Activated CD4-positive, alpha-beta memory T cell treated with anti-CD3 and anti-CD28 coated beads for 36 hours (primary cell): ENCODE measurements at regions of chrX and their contacts with region 1.

Region 1: DNA sequence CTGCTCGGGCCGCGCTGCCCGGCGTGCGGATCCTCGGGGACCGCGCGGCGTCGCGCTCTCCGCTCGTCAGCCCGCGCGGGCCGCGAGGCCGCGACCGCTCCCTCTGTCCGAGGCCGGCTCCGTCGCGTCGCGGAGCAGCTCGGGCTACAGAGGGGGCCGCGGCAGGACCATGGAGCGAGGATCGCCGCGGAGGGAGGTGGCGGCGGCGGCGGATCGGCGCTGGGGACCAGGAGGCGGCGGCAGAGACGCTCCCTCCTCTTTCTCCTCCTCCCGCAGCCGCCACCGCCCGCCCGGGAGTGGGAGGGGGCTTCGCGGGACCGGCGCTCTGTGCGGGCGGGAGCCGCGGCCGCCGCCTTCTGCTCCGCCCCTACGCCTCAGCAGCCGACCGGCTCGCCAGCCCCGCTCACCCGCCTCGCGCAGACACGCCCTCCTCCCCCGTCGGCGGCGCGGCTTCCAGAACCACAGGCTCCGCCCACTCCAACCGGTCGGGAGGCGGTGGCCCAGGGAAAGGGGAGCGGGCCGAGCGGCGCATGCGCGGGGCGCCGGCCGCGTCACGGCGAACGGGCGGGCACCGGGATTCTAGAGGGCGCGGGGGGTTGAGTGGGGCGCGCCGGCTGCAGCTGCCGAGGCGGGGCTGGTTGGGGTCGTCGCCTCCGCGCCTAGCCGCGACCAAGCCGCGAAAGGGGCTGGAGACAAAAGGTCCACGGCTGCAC is at the start of gene CASK:
- DNase-seq: peak; percentile 93
- H3K4me3 Mint-ChIP-seq: peak within 1 kb of the TSS; percentile 92
- H3K27ac Mint-ChIP-seq: peak within 1 kb of the TSS; percentile 89
- H3K4me1 Mint-ChIP-seq: peaks cover 26% of the 10 kb centered on the region
- H3K27me3 Mint-ChIP-seq: no peaks in the 10 kb centered on the region
- total RNA-seq, gene CASK: 27.0 to 27.8 TPM

Region 2: DNA sequence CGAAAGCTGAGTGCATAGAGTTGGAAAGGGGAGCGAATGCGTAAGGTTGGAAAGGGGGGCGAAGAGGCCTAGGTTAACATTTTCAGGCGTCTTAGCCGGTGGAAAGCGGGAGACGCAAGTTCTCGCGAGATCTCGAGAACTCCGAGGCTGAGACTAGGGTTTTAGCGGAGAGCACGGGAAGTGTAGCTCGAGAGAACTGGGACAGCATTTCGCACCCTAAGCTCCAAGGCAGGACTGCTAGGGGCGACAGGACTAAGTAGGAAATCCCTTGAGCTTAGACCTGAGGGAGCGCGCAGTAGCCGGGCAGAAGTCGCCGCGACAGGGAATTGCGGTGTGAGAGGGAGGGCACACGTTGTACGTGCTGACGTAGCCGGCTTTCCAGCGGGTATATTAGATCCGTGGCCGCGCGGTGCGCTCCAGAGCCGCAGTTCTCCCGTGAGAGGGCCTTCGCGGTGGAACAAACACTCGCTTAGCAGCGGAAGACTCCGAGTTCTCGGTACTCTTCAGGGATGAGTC is 589.6 kb before region 1 on chrX and contains the start of gene DDX3X:
- CTCF ChIA-PET with region 1: no interaction called
- POLR2A ChIA-PET with region 1: no interaction called
- intact Hi-C with region 1: loop called (anchors 5 kb)
- DNase-seq: peak; percentile 89
- H3K4me3 Mint-ChIP-seq: peak within 1 kb of the TSS; percentile 93
- H3K27ac Mint-ChIP-seq: peak within 1 kb of the TSS; percentile 100
- H3K4me1 Mint-ChIP-seq: peaks cover 17% of the 10 kb centered on the region
- H3K27me3 Mint-ChIP-seq: peaks cover 1% of the 10 kb centered on the region
- total RNA-seq, gene DDX3X: 216 to 218 TPM

Region 3: DNA sequence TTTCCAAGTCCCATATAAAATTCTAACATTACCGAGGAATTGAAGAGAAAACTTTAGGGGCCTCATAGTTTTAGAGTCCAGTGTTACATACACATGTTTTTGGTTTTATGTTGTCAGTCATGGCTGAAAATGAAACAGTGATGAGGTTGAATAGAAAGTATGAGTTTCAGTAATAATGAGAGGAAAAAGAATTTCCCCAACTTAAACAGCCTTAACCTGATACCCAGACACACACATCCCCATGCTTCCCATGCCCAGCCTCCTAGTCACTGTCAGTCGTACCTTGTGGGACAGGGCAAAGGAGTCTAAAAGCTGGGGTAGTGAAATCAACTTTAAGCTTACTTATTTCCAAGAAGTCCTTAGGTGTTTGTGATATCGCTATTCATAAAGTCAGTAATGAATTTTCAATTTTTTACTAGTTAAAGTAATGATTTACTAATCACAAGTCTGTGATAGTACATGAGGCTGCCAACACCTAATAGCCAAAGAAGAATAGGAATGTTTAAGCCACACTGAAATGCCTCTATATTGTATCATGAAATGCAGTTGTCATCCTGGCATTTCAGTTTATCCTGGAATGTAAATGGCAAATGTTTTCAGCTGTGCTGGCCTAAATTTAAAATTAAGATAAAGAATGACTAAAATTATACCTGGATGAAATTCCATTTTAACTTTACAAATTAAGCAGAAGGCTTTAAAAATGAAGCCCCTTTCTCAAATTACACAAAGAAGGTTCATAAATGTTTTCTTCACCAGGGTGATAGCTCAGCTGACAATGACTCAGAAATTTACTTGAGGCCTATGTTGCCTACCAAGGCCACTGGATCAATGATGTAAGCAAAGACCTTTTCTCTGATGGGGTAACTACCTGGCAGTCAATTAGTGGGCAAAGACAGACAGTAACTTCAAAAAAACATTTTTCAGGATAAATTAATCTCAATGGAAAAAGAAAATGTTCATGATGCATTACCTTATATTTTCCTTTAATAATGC is 258.8 kb before region 1 on chrX:
- CTCF ChIA-PET with region 1: no interaction called
- POLR2A ChIA-PET with region 1: no interaction called
- intact Hi-C with region 1: loop called (anchors 10 kb)
- DNase-seq: peak; percentile 33
- H3K4me3 Mint-ChIP-seq: no peak overlapping the region
- H3K27ac Mint-ChIP-seq: peak overlapping the region; percentile 73
- H3K4me1 Mint-ChIP-seq: peaks cover 47% of the 10 kb centered on the region
- H3K27me3 Mint-ChIP-seq: no peaks in the 10 kb centered on the region

Region 4: GRCh38 chrX:41868392-41868977 is 54.9 kb before region 1 on chrX:
- CTCF ChIA-PET with region 1: no interaction called
- POLR2A ChIA-PET with region 1: no interaction called
- intact Hi-C with region 1: loop called (anchors 5 kb)
- DNase-seq: no peak
- H3K4me3 Mint-ChIP-seq: no peak overlapping the region
- H3K27ac Mint-ChIP-seq: peak overlapping the region; percentile 45
- H3K4me1 Mint-ChIP-seq: peaks cover 55% of the 10 kb centered on the region
- H3K27me3 Mint-ChIP-seq: no peaks in the 10 kb centered on the region

Region 5: GRCh38 chrX:41933546-41933945 is 10.1 kb after region 1 on chrX:
- CTCF ChIA-PET with region 1: no interaction called
- POLR2A ChIA-PET with region 1: no interaction called
- intact Hi-C with region 1: loop called (anchors 1 kb)
- DNase-seq: no peak
- H3K4me3 Mint-ChIP-seq: no peak overlapping the region
- H3K27ac Mint-ChIP-seq: no peak overlapping the region
- H3K4me1 Mint-ChIP-seq: peaks cover 21% of the 10 kb centered on the region
- H3K27me3 Mint-ChIP-seq: no peaks in the 10 kb centered on the region

Region 6: DNA sequence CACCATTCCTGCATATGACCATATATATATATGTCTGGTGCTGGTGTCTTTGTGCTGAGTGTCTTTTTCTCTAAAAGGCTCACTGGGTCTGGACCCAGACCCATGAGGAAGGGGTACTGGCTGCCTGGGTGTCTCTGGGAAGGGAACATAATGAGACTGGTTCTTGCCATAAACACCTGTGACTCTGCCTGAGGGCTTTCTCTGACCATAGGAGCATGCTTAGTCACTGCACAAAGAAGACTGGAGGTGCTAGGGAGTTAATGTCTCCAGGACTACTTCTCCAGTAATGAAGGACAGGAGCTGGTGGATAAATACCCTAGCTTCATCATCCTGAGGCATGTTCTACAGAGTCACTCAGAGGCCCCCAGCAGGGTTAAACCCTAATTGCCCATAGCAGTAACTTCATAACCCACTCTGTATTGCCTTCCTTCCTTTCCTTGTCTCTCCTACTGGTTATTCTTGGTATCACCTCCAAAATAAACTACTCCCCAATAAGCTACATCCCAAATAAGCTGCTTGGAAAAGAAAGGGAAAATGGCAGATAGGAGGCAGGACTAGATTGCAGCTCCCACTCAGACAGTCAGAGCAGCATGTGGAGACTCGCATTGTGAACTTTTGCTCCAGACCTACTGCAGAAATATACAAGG is 47.1 kb after region 1 on chrX:
- CTCF ChIA-PET with region 1: no interaction called
- POLR2A ChIA-PET with region 1: no interaction called
- intact Hi-C with region 1: no loop called
- DNase-seq: no peak
- H3K4me3 Mint-ChIP-seq: no peak overlapping the region
- H3K27ac Mint-ChIP-seq: no peak overlapping the region
- H3K4me1 Mint-ChIP-seq: no peaks in the 10 kb centered on the region
- H3K27me3 Mint-ChIP-seq: no peaks in the 10 kb centered on the region

Region 7: DNA sequence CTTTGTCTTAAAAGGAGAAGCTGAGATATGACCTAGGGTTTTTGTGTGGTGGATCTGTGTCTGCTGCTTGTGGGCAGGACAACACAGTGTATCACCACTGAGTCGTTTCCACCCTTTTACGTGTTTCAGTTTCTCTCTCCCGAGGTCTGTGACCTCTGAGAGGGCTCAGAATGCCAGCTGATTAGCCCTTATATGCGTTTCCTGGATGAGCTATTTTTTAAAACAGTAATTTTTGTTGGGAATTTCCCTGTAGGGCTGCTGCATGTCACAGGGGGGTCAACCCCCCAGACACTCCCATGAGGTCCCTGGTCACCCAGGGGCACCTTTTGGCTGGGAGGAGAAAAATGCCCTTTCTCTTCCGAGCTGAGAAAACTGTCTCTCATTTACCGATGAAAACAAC is 170.3 kb after region 1 on chrX:
- CTCF ChIA-PET with region 1: no interaction called
- POLR2A ChIA-PET with region 1: no interaction called
- intact Hi-C with region 1: loop called (anchors 5 kb)
- DNase-seq: peak; percentile 17
- H3K4me3 Mint-ChIP-seq: no peak overlapping the region
- H3K27ac Mint-ChIP-seq: no peak overlapping the region
- H3K4me1 Mint-ChIP-seq: peaks cover 21% of the 10 kb centered on the region
- H3K27me3 Mint-ChIP-seq: no peaks in the 10 kb centered on the region

Region 8: DNA sequence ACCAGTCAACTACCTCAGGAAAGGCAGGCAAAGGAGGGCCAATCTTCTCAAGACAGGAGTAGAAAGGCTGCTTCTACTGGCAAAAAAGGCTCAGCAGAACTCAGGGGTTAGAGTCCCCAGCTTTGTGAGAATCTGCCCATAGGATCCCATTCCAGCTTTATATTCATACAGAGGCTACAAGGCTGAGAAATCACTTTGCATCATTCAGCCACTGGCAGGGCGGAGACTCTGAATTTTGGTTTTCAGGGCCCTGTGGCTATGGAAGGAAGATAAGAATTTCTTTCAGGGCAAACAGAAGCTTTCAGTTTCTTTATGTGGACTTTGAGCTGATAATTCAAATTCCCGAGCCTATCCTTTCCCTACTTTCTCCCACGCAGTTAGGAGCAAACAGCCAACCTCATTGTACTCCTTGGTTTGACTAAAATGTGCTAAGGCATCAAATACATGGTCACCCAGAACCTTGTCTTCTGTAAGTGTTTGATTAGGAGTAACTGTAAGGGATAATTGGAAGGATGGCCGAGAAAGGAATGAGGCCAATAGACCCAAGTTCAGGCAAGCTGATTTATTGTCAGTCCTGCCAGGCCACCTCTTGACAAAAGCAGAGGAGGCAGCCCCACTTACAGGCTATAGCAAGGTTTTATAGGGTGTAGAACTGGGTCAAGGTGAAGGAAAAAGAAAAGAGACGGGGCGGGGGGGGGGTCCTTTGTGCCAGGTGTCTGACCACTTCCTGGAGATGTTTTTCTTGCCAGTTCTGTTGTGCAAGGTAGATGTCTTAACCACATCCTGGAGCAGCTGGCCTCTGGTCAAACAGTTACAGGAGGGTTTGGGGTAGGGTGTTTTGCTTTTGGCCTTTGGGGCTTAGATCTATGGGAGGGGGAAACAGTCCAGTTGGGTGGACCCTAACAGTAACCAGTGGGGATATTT is 1019.9 kb after region 1 on chrX:
- CTCF ChIA-PET with region 1: no interaction called
- POLR2A ChIA-PET with region 1: interaction called, 3 read pairs
- intact Hi-C with region 1: loop called (anchors 2 kb)
- DNase-seq: peak; percentile 52
- H3K4me3 Mint-ChIP-seq: peak overlapping the region; percentile 16
- H3K27ac Mint-ChIP-seq: peak overlapping the region; percentile 95
- H3K4me1 Mint-ChIP-seq: peaks cover 75% of the 10 kb centered on the region
- H3K27me3 Mint-ChIP-seq: no peaks in the 10 kb centered on the region